ENCODE measurements at regions of chrX and their contacts with region 1.

Region 1: GRCh38 chrX:12814420-12814819 is 23.2 kb downstream of the PRPS2 start:
- DNase-seq: no peak
- ATAC-seq: peak; percentile 52 to 78 (median 72)
- H3K4me3 ChIP-seq: no peak overlapping the region
- H3K27ac ChIP-seq: no peak overlapping the region
- H3K4me1 ChIP-seq: no peaks in the 10 kb centered on the region
- H3K27me3 ChIP-seq: no peaks in the 10 kb centered on the region
- CTCF ChIP-seq: peak; percentile 53 to 60 (median 58)
- POLR2A ChIP-seq: no peak

Region 2: DNA sequence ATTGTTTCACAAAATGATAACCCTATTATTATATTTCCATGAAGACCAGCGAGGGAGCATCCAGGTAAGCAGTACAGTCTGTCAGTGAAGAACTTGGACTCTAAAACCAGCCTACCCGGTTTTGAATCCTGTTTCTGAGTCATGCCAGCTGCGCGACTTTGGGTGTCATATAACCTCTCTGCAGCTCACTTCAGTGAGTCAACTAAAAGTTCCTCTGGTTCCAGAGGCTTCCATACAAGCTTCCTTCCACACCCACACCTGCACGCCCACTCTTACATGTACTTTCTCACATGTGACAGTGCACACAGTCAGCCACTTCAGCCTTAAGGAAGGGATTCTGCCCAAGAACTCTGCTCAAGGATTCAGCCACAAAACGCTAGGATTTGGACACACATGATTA is 73.0 kb before region 1 on chrX:
- intact Hi-C with region 1: no loop called
- DNase-seq: no peak
- ATAC-seq: no peak
- H3K4me3 ChIP-seq: no peak overlapping the region
- H3K27ac ChIP-seq: no peak overlapping the region
- H3K4me1 ChIP-seq: no peaks in the 10 kb centered on the region
- H3K27me3 ChIP-seq: no peaks in the 10 kb centered on the region
- CTCF ChIP-seq: no peak
- POLR2A ChIP-seq: no peak

Region 3: GRCh38 chrX:12894074-12895030 is 79.9 kb after region 1 on chrX:
- intact Hi-C with region 1: loop called (anchors 10 kb)
- DNase-seq: peak in 1 of 3 donors; percentile 39
- ATAC-seq: peak; percentile 49 to 63 (median 56)
- H3K4me3 ChIP-seq: no peak overlapping the region
- H3K27ac ChIP-seq: no peak overlapping the region
- H3K4me1 ChIP-seq: no peaks in the 10 kb centered on the region
- H3K27me3 ChIP-seq: no peaks in the 10 kb centered on the region
- CTCF ChIP-seq: peak; percentile 42 to 77 (median 66)
- POLR2A ChIP-seq: no peak